B cell (primary cell): ENCODE measurements at regions of chr6 and their contacts with region 1.

Region 1: GRCh38 chr6:41779793-41780545 is at the start of gene FRS3:
- DNase-seq: peak; percentile 98
- ATAC-seq: peak; percentile 96
- H3K4me3 ChIP-seq: peak within 1 kb of the TSS; percentile 49 to 79 (median 67)
- H3K4me3 Mint-ChIP-seq: peak within 1 kb of the TSS; percentile 96
- H3K27ac ChIP-seq: peak within 1 kb of the TSS in 1 of 2 donors; percentile 25
- H3K27ac Mint-ChIP-seq: peak within 1 kb of the TSS; percentile 77
- H3K4me1 ChIP-seq: peaks cover 20 to 28% of the 10 kb centered on the region in 2 donors
- H3K4me1 Mint-ChIP-seq: peaks cover 28% of the 10 kb centered on the region
- H3K27me3 ChIP-seq: no peaks in the 10 kb centered on the region
- H3K27me3 Mint-ChIP-seq: no peaks in the 10 kb centered on the region
- CTCF ChIP-seq: peak; percentile 79
- total RNA-seq, gene FRS3: 8.6 and 9.8 TPM in 2 replicates

Region 2: DNA sequence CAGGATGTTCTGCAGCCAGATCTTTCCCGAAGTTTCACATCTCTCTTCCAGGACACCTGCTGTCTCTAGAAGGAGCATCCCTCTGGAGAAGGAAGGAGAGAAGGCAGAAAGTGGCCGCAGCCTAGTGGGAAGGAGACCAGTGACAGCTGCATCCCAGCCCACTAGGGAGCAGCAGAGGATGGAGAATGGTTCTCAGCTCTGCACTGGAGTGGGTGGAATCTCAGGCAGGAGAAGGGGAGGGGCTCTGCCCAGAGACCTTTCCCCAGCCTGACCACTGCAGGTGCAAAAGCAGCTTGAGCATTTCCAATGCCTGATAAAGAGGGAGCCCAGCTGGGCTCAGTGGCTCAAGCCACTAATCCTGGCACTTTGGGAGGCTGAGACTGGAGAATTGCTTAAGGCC is 412.3 kb before region 1 on chr6:
- CTCF ChIA-PET with region 1: interaction called, 3 read pairs
- POLR2A ChIA-PET with region 1: no interaction called
- intact Hi-C with region 1: loop called (anchors 2 kb)
- DNase-seq: no peak
- ATAC-seq: no peak
- H3K4me3 ChIP-seq: no peak overlapping the region
- H3K4me3 Mint-ChIP-seq: no peak overlapping the region
- H3K27ac ChIP-seq: no peak overlapping the region
- H3K27ac Mint-ChIP-seq: no peak overlapping the region
- H3K4me1 ChIP-seq: peaks cover 16 to 23% of the 10 kb centered on the region in 2 donors
- H3K4me1 Mint-ChIP-seq: peaks cover 22% of the 10 kb centered on the region
- H3K27me3 ChIP-seq: peaks cover 2 to 53% (median 23%) of the 10 kb centered on the region in 4 experiments
- H3K27me3 Mint-ChIP-seq: peaks cover 55% of the 10 kb centered on the region
- CTCF ChIP-seq: no peak

Region 3: GRCh38 chr6:41602864-41603608 is 176.9 kb before region 1 on chr6:
- CTCF ChIA-PET with region 1: interaction called, 34 read pairs
- POLR2A ChIA-PET with region 1: no interaction called
- intact Hi-C with region 1: no loop called
- DNase-seq: peak; percentile 85
- ATAC-seq: peak; percentile 90
- H3K4me3 ChIP-seq: peak overlapping the region in 1 of 5 experiments; percentile 11
- H3K4me3 Mint-ChIP-seq: peak overlapping the region; percentile 41
- H3K27ac ChIP-seq: no peak overlapping the region
- H3K27ac Mint-ChIP-seq: no peak overlapping the region
- H3K4me1 ChIP-seq: peaks cover 4 to 13% of the 10 kb centered on the region in 2 donors
- H3K4me1 Mint-ChIP-seq: peaks cover 10% of the 10 kb centered on the region
- H3K27me3 ChIP-seq: peaks cover 0 to 3% (median 0%) of the 10 kb centered on the region in 4 experiments
- H3K27me3 Mint-ChIP-seq: peaks cover 11% of the 10 kb centered on the region
- CTCF ChIP-seq: peak; percentile 82

Region 4: GRCh38 chr6:41622206-41622958 is 157.6 kb before region 1 on chr6:
- CTCF ChIA-PET with region 1: no interaction called
- POLR2A ChIA-PET with region 1: no interaction called
- intact Hi-C with region 1: no loop called
- DNase-seq: no peak
- ATAC-seq: no peak
- H3K4me3 ChIP-seq: no peak overlapping the region
- H3K4me3 Mint-ChIP-seq: no peak overlapping the region
- H3K27ac ChIP-seq: no peak overlapping the region
- H3K27ac Mint-ChIP-seq: no peak overlapping the region
- H3K4me1 ChIP-seq: no peaks in the 10 kb centered on the region
- H3K4me1 Mint-ChIP-seq: no peaks in the 10 kb centered on the region
- H3K27me3 ChIP-seq: peaks cover 0 to 3% (median 0%) of the 10 kb centered on the region in 4 experiments
- H3K27me3 Mint-ChIP-seq: peaks cover 21% of the 10 kb centered on the region
- CTCF ChIP-seq: no peak

Region 5: GRCh38 chr6:41763470-41763869 is 16.5 kb before region 1 on chr6:
- CTCF ChIA-PET with region 1: no interaction called
- POLR2A ChIA-PET with region 1: no interaction called
- intact Hi-C with region 1: no loop called
- DNase-seq: no peak
- ATAC-seq: no peak
- H3K4me3 ChIP-seq: no peak overlapping the region
- H3K4me3 Mint-ChIP-seq: no peak overlapping the region
- H3K27ac ChIP-seq: no peak overlapping the region
- H3K27ac Mint-ChIP-seq: no peak overlapping the region
- H3K4me1 ChIP-seq: no peaks in the 10 kb centered on the region
- H3K4me1 Mint-ChIP-seq: no peaks in the 10 kb centered on the region
- H3K27me3 ChIP-seq: peaks cover 0 to 3% (median 0%) of the 10 kb centered on the region in 4 experiments
- H3K27me3 Mint-ChIP-seq: peaks cover 3% of the 10 kb centered on the region
- CTCF ChIP-seq: no peak

Region 6: GRCh38 chr6:42104095-42104806 is 324.3 kb after region 1 on chr6:
- CTCF ChIA-PET with region 1: interaction called, 4 read pairs
- POLR2A ChIA-PET with region 1: no interaction called
- intact Hi-C with region 1: loop called (anchors 1 kb)
- DNase-seq: peak; percentile 81
- ATAC-seq: peak; percentile 73
- H3K4me3 ChIP-seq: peak overlapping the region; percentile 3 to 65 (median 47)
- H3K4me3 Mint-ChIP-seq: peak overlapping the region; percentile 75
- H3K27ac ChIP-seq: no peak overlapping the region
- H3K27ac Mint-ChIP-seq: peak overlapping the region; percentile 10
- H3K4me1 ChIP-seq: peaks cover 6 to 11% of the 10 kb centered on the region in 2 donors
- H3K4me1 Mint-ChIP-seq: peaks cover 8% of the 10 kb centered on the region
- H3K27me3 ChIP-seq: peaks cover 0 to 25% (median 2%) of the 10 kb centered on the region in 4 experiments
- H3K27me3 Mint-ChIP-seq: peaks cover 19% of the 10 kb centered on the region
- CTCF ChIP-seq: peak; percentile 90

Region 7: DNA sequence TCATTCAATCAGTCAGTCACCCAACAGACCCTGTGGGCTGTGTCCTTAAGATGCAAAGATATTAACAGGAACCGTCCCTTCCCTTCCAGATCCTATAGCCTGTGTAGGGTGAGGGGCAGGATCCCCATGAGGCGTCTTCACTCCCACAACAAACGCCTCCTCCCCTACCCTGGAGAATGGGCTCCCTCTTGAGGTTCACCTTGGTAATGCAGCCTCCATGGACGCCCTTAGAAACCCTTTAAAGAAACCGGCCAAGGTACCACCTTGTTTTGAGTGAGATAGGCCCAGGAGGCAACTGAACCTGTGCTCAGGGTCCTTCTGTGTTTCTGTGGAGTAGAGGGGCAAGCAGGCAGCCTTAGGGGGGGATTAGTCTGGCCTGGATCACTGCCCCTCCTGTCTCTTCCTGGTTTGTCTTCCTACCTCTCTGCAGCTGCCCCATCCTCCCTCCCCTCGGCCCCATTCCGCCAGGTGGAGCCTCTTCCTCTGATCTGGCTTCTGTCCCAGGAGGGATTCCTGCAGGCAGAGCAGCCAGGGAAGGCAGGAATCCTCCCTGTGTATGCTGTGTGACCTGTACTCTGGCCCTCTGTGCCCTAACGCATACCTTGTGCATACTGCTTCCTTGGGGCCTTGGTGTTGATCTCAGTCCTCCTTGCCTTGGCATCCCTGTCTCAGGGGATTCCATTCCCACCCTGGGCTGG is 386.6 kb after region 1 on chr6:
- CTCF ChIA-PET with region 1: no interaction called
- POLR2A ChIA-PET with region 1: interaction called, 6 read pairs
- intact Hi-C with region 1: loop called (anchors 1 kb)
- DNase-seq: peak; percentile 79
- ATAC-seq: peak; percentile 76
- H3K4me3 ChIP-seq: no peak overlapping the region
- H3K4me3 Mint-ChIP-seq: no peak overlapping the region
- H3K27ac ChIP-seq: no peak overlapping the region
- H3K27ac Mint-ChIP-seq: no peak overlapping the region
- H3K4me1 ChIP-seq: no peaks in the 10 kb centered on the region
- H3K4me1 Mint-ChIP-seq: no peaks in the 10 kb centered on the region
- H3K27me3 ChIP-seq: no peaks in the 10 kb centered on the region
- H3K27me3 Mint-ChIP-seq: peaks cover 7% of the 10 kb centered on the region
- CTCF ChIP-seq: peak; percentile 89

Region 8: DNA sequence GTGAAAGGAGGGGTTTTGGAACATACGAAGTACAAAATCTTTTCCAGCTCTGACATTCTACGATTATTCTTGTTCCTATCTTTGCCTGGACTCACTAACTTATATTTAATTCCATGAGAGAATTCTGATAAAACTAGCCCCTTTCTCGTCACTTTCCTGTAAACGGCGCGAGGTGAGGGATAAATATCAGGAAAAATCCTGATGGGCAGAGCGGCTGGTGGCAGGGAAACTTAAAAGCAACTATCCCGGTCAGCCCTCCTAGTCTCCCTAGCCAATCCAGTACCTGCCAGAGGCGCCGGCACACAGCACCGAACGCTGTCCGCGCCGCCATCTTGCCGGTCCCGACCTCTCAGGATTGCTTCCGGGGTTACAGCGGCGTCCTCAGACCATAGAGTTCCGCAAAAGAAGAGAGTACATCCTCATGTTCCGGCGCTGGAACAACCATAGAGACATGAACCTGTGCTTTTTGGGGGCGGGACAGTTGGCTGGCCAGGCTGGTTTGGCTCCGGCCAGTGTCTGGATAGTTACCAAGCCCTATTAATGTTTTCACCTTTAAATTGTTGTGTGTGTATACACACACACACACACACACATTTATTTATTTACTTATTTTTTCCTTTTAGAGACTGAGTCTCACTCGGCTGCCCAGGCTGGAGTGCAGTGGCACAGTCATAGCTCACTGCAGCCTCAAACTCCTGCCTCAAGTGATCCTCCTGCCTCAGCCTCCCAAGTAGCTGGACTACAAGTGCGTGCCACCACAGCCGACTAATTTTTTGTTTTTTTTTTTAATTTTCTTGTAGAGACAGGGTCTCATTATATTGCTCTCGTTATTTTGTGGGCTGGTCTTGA is 437.8 kb after region 1 on chr6 and contains the start of gene MRPS10:
- CTCF ChIA-PET with region 1: interaction called, 9 read pairs
- POLR2A ChIA-PET with region 1: interaction called, 5 read pairs
- intact Hi-C with region 1: loop called (anchors 1 kb)
- DNase-seq: peak; percentile 92
- ATAC-seq: peak; percentile 99
- H3K4me3 ChIP-seq: peak within 1 kb of the TSS; percentile 76 to 98 (median 86)
- H3K4me3 Mint-ChIP-seq: peak within 1 kb of the TSS; percentile 99
- H3K27ac ChIP-seq: peak within 1 kb of the TSS; percentile 58 to 76
- H3K27ac Mint-ChIP-seq: peak within 1 kb of the TSS; percentile 98
- H3K4me1 ChIP-seq: peaks cover 7 to 14% of the 10 kb centered on the region in 2 donors
- H3K4me1 Mint-ChIP-seq: peaks cover 23% of the 10 kb centered on the region
- H3K27me3 ChIP-seq: no peaks in the 10 kb centered on the region
- H3K27me3 Mint-ChIP-seq: peaks cover 4% of the 10 kb centered on the region
- CTCF ChIP-seq: no peak
- total RNA-seq, gene MRPS10: 26.4 and 28.6 TPM in 2 replicates